Natural killer cell (primary cell): ENCODE measurements at regions of chr12 and their contacts with region 1.

Region 1: DNA sequence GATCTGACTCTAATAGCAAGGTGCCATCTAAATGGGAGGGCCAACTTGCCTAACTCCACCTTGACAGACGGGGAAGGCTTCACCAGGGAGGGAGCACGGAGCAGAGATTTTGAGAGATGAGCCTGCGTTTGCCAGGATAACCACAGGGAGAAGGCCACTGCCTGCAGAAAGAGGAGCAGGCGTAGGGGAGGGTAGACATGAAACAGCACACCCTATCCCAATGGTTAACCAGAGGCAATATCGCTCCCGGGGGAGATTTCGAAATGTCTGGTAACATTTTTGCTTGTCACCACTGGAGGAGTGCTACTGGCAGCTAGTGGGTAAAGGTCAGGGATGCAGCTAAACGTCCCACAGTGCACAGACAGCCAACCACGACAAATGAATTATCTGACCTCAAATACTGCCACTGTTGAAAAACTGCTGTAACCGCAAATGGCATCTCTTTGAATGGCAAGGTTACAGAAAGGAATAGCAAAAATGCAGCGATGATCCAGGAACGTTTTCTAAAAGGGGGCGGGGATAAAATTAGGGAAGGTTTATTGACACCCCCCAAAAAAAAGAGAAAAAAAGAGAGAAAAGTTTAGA is 126.0 kb upstream of the ATF7IP start:
- DNase-seq: peak; percentile 28 to 54
- ATAC-seq: peak; percentile 81 to 82 (median 82)
- H3K4me3 ChIP-seq: peak overlapping the region; percentile 12
- H3K4me3 Mint-ChIP-seq: peak overlapping the region; percentile 86
- H3K27ac ChIP-seq: peak overlapping the region; percentile 70
- H3K27ac Mint-ChIP-seq: peak overlapping the region; percentile 56 to 85
- H3K4me1 ChIP-seq: peaks cover 14% of the 10 kb centered on the region
- H3K4me1 Mint-ChIP-seq: peaks cover 16 to 25% of the 10 kb centered on the region in 2 donors
- H3K27me3 ChIP-seq: no peaks in the 10 kb centered on the region
- H3K27me3 Mint-ChIP-seq: no peaks in the 10 kb centered on the region
- CTCF ChIP-seq: no peak

Region 2: GRCh38 chr12:14199455-14200198 is 39.8 kb before region 1 on chr12:
- intact Hi-C with region 1: no loop called
- DNase-seq: no peak
- ATAC-seq: no peak
- H3K4me3 ChIP-seq: no peak overlapping the region
- H3K4me3 Mint-ChIP-seq: no peak overlapping the region
- H3K27ac ChIP-seq: no peak overlapping the region
- H3K27ac Mint-ChIP-seq: no peak overlapping the region
- H3K4me1 ChIP-seq: no peaks in the 10 kb centered on the region
- H3K4me1 Mint-ChIP-seq: no peaks in the 10 kb centered on the region
- H3K27me3 ChIP-seq: peaks cover 3% of the 10 kb centered on the region
- H3K27me3 Mint-ChIP-seq: no peaks in the 10 kb centered on the region
- CTCF ChIP-seq: no peak

Region 3: GRCh38 chr12:14219156-14219555 is 20.3 kb before region 1 on chr12:
- intact Hi-C with region 1: no loop called
- DNase-seq: no peak
- ATAC-seq: no peak
- H3K4me3 ChIP-seq: no peak overlapping the region
- H3K4me3 Mint-ChIP-seq: no peak overlapping the region
- H3K27ac ChIP-seq: no peak overlapping the region
- H3K27ac Mint-ChIP-seq: no peak overlapping the region
- H3K4me1 ChIP-seq: peaks cover 10% of the 10 kb centered on the region
- H3K4me1 Mint-ChIP-seq: peaks cover 4 to 19% of the 10 kb centered on the region in 2 donors
- H3K27me3 ChIP-seq: no peaks in the 10 kb centered on the region
- H3K27me3 Mint-ChIP-seq: no peaks in the 10 kb centered on the region
- CTCF ChIP-seq: no peak

Region 4: DNA sequence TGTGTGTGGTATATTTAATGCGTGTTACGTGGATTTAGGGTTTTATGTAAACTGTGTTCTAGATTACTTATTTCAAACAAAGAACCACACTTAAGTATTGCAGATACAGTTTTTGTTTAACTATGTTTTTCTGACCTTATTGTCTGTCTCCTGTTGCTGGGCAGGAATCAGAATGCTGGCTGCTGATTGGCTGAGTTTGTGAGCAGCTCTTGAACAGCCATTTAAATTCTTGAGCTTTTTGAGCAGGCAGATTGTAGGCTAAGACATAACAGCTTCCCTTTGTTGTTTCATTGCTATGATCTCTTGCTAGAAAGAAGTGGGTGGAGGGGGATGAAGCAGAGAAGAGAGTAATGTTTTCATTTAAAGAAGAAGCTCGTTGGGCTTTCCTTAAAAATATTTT is 178.3 kb after region 1 on chr12:
- intact Hi-C with region 1: loop called (anchors 1 kb)
- DNase-seq: peak; percentile 59 to 89
- ATAC-seq: peak; percentile 49 to 66 (median 63)
- H3K4me3 ChIP-seq: no peak overlapping the region
- H3K4me3 Mint-ChIP-seq: peak overlapping the region; percentile 86
- H3K27ac ChIP-seq: peak overlapping the region; percentile 42
- H3K27ac Mint-ChIP-seq: peak overlapping the region; percentile 89 to 90
- H3K4me1 ChIP-seq: peaks cover 14% of the 10 kb centered on the region
- H3K4me1 Mint-ChIP-seq: peaks cover 56 to 59% of the 10 kb centered on the region in 2 donors
- H3K27me3 ChIP-seq: no peaks in the 10 kb centered on the region
- H3K27me3 Mint-ChIP-seq: no peaks in the 10 kb centered on the region
- CTCF ChIP-seq: no peak

Region 5: GRCh38 chr12:14454098-14454907 is 214.9 kb after region 1 on chr12:
- intact Hi-C with region 1: loop called (anchors 1 kb)
- DNase-seq: peak in 1 of 2 donors; percentile 63
- ATAC-seq: peak; percentile 80 to 98 (median 96)
- H3K4me3 ChIP-seq: no peak overlapping the region
- H3K4me3 Mint-ChIP-seq: peak overlapping the region; percentile 18
- H3K27ac ChIP-seq: peak overlapping the region; percentile 6
- H3K27ac Mint-ChIP-seq: peak overlapping the region; percentile 72 to 82
- H3K4me1 ChIP-seq: peaks cover 9% of the 10 kb centered on the region
- H3K4me1 Mint-ChIP-seq: peaks cover 44 to 46% of the 10 kb centered on the region in 2 donors
- H3K27me3 ChIP-seq: no peaks in the 10 kb centered on the region
- H3K27me3 Mint-ChIP-seq: no peaks in the 10 kb centered on the region
- CTCF ChIP-seq: peak; percentile 63

Region 6: DNA sequence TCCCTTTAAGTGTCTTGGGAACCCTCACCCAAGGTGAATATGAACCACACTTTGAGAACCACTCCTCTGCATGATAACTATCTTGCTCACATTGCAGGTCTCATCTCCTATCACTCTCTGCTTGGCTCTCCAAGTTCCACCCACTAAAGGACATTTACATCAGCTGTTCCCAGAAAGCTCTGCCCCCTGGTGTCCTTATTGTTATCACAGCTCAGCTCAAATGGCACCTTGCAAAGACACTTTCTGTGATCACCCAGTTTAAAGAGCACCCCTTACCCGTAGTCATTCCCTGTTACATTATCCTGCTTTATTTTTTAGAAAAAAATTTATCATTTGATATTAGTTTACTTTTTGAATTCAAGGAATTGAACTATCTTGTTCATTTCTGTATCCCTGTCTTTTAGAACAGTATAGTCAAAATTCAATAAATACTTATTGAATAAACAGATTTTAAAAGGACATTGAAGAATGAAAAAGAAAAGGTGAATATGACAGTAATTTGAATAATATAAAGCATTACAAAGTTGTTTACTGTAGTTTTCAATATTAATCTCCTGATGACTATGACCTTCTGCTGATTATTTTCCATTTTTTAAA is 477.5 kb after region 1 on chr12:
- intact Hi-C with region 1: loop called (anchors 1 kb)
- DNase-seq: peak in 1 of 2 donors; percentile 77
- ATAC-seq: peak; percentile 46 to 73 (median 59)
- H3K4me3 ChIP-seq: no peak overlapping the region
- H3K4me3 Mint-ChIP-seq: no peak overlapping the region
- H3K27ac ChIP-seq: no peak overlapping the region
- H3K27ac Mint-ChIP-seq: no peak overlapping the region
- H3K4me1 ChIP-seq: no peaks in the 10 kb centered on the region
- H3K4me1 Mint-ChIP-seq: no peaks in the 10 kb centered on the region
- H3K27me3 ChIP-seq: no peaks in the 10 kb centered on the region
- H3K27me3 Mint-ChIP-seq: peaks cover 19 to 22% of the 10 kb centered on the region in 2 donors
- CTCF ChIP-seq: peak; percentile 52